Activated CD4-positive, alpha-beta memory T cell treated with anti-CD3 and anti-CD28 coated beads for 36 hours (primary cell): ENCODE measurements at regions of chr19 and their contacts with region 1.

Region 1: DNA sequence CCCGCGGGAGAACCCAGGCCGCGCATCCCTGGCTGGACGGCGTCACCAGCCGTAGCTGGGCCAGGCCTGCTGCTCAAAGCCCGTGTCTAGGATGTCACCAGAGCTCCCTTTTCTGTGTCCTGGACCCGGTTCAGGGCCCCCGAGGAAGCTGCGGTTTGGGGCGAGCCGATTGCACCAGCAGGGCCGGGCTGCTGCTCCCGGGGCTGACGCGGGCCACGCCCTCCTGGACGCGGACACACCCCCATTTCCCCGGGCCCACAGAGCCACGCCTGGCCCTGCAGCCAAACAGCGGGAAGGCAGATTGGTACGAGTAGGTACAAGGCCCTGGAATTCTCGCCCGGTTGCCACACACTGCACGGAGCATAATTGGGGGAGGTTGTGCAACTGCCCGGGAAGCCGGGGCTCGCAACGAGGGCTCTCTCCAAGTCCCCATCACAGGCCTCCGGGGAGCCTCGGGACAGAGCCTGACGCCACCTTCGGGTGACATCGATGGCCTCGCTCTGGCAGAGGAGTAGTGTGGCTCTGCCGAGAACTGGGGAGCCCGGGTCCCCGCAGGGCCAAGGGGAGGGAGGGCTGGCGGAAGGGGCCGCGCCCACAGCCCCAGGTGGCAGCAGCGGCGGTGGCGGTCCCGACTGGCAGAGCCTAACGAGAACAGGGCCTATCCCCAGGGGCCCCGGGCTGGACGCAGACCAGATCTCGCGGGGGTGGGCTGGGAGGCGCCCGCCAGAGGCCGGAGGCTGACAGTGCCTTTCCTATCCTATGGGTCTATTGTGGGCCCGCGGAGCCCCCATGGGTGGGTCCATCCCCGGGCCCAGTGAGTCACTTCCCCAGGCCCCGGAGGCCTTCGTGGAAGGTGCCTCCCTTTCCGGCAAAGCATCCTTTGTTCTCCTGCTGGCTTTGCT is 23.5 kb downstream of the KCTD15 start:
- DNase-seq: peak; percentile 85
- H3K4me3 Mint-ChIP-seq: peak overlapping the region; percentile 76
- H3K27ac Mint-ChIP-seq: peak overlapping the region; percentile 59
- H3K4me1 Mint-ChIP-seq: peaks cover 19% of the 10 kb centered on the region
- H3K27me3 Mint-ChIP-seq: no peaks in the 10 kb centered on the region

Region 2: GRCh38 chr19:33795370-33796163 is 24.6 kb before region 1 on chr19:
- CTCF ChIA-PET with region 1: interaction called, 11 read pairs
- POLR2A ChIA-PET with region 1: interaction called, 8 read pairs
- intact Hi-C with region 1: loop called (anchors 1 kb)
- DNase-seq: peak; percentile 68
- H3K4me3 Mint-ChIP-seq: peak overlapping the region; percentile 71
- H3K27ac Mint-ChIP-seq: peak overlapping the region; percentile 72
- H3K4me1 Mint-ChIP-seq: peaks cover 2% of the 10 kb centered on the region
- H3K27me3 Mint-ChIP-seq: peaks cover 9% of the 10 kb centered on the region